ENCODE measurements at regions of chr16 and their contacts with region 1.

Region 1: GRCh38 chr16:69773260-69773947 is 11.3 kb downstream of the WWP2 start:
- DNase-seq: no peak
- H3K4me3 Mint-ChIP-seq: no peak overlapping the region
- H3K27ac Mint-ChIP-seq: peak overlapping the region; percentile 6
- H3K4me1 Mint-ChIP-seq: peaks cover 36% of the 10 kb centered on the region
- H3K27me3 Mint-ChIP-seq: no peaks in the 10 kb centered on the region

Region 2: GRCh38 chr16:69761983-69762813 is 11.2 kb before region 1 on chr16 and contains the start of gene WWP2:
- CTCF ChIA-PET with region 1: interaction called, 4 read pairs
- POLR2A ChIA-PET with region 1: interaction called, 16 read pairs
- intact Hi-C with region 1: no loop called
- DNase-seq: peak; percentile 83
- H3K4me3 Mint-ChIP-seq: peak within 1 kb of the TSS; percentile 95
- H3K27ac Mint-ChIP-seq: peak within 1 kb of the TSS; percentile 93
- H3K4me1 Mint-ChIP-seq: peaks cover 31% of the 10 kb centered on the region
- H3K27me3 Mint-ChIP-seq: no peaks in the 10 kb centered on the region
- total RNA-seq, gene WWP2: 35.8 to 39.5 TPM

Region 3: GRCh38 chr16:69880640-69881133 is 107.3 kb after region 1 on chr16:
- CTCF ChIA-PET with region 1: no interaction called
- POLR2A ChIA-PET with region 1: no interaction called
- intact Hi-C with region 1: no loop called
- DNase-seq: no peak
- H3K4me3 Mint-ChIP-seq: no peak overlapping the region
- H3K27ac Mint-ChIP-seq: no peak overlapping the region
- H3K4me1 Mint-ChIP-seq: no peaks in the 10 kb centered on the region
- H3K27me3 Mint-ChIP-seq: no peaks in the 10 kb centered on the region

Region 4: GRCh38 chr16:70298988-70299938 is 525.9 kb after region 1 on chr16 and contains the start of gene DDX19B:
- CTCF ChIA-PET with region 1: no interaction called
- POLR2A ChIA-PET with region 1: no interaction called
- intact Hi-C with region 1: no loop called
- DNase-seq: peak; percentile 81
- H3K4me3 Mint-ChIP-seq: peak within 1 kb of the TSS; percentile 91
- H3K27ac Mint-ChIP-seq: peak within 1 kb of the TSS; percentile 91
- H3K4me1 Mint-ChIP-seq: peaks cover 36% of the 10 kb centered on the region
- H3K27me3 Mint-ChIP-seq: no peaks in the 10 kb centered on the region
- total RNA-seq, gene DDX19B: 31.2 to 36.6 TPM

Measured in activated CD4-positive, alpha-beta memory T cell treated with anti-CD3 and anti-CD28 coated beads for 36 hours (primary cell).